ENCODE measurements at regions of chr15 and their contacts with region 1.

Region 1: DNA sequence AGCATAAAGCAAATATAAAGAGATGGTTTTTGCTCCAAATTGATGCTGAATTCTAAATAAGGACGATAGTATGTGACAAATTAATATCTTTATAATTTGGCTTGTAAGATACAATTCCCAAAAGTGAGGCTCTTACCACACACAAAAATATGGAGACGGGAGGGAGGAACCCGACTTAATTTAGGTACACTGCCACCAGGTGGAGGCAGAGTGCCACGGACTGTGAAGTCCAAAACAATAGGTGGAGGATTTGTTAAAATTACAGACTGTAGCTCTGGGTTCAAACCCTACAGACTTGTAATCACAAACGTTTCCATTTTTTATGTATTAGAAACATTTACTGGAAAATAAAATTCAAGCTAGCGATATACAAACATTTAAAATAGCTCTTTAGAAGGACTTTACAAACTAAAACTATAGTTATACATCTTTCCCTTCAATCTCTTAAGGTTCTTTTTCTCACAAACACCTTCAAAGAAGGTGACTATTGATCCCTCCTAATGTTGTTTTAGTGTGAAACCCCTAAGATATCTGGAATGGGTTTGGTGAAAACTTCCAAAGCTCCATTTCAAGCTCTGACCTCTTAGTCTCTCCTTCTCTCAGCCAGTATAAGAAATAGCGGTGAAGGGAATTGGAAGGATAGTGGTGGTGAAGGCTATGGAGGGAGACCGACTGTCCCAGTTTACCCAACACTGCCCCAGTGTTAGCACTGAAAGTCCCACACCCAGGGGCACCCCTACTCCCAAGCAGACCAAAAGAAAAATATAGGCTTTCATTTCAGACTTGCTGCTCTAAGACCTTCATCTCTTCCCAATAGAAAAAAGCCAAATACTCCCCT is 89.7 kb downstream of the AQP9 start:
- DNase-seq: peak; percentile 78
- ATAC-seq: peak; percentile 96
- H3K4me3 ChIP-seq: no peak overlapping the region
- H3K27ac ChIP-seq: no peak overlapping the region
- H3K4me1 ChIP-seq: peaks cover 2 to 7% of the 10 kb centered on the region in 2 experiments; a peak in 1 of 4 replicates
- H3K27me3 ChIP-seq: no peaks in the 10 kb centered on the region
- CTCF ChIP-seq: peak; percentile 76 to 93 (median 87)
- POLR2A ChIP-seq: no peak
- RAD21 ChIP-seq: peak; percentile 96

Region 2: GRCh38 chr15:58124585-58124984 is 103.3 kb before region 1 on chr15:
- CTCF ChIA-PET with region 1: no interaction called
- POLR2A ChIA-PET with region 1: no interaction called
- RAD21 ChIA-PET with region 1: no interaction called
- intact Hi-C with region 1: no loop called
- DNase-seq: no peak
- ATAC-seq: no peak
- H3K4me3 ChIP-seq: no peak overlapping the region
- H3K27ac ChIP-seq: no peak overlapping the region
- H3K4me1 ChIP-seq: no peaks in the 10 kb centered on the region
- H3K27me3 ChIP-seq: no peaks in the 10 kb centered on the region
- CTCF ChIP-seq: no peak
- POLR2A ChIP-seq: no peak
- RAD21 ChIP-seq: no peak

Region 3: DNA sequence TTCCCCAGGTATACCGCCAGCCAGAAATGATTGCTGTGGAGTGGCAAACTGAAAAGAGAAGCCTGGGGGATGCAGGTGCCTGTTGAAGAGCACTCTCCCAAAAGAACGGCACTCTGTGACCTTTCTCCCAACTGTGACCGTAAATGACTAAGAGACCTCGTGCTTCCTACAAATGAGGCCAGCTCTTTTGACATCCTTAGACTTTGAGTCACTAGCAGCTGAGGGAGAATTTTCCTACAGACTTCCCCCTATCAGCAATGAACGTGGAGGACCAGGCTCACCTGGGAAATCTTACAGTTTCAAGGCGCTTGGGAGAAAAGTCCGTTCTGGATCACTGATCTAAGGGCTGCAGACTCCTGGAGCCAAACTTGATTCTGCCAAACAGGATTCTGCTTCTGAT is 81.2 kb before region 1 on chr15:
- CTCF ChIA-PET with region 1: no interaction called
- POLR2A ChIA-PET with region 1: no interaction called
- RAD21 ChIA-PET with region 1: no interaction called
- intact Hi-C with region 1: no loop called
- DNase-seq: no peak
- ATAC-seq: no peak
- H3K4me3 ChIP-seq: no peak overlapping the region
- H3K27ac ChIP-seq: no peak overlapping the region
- H3K4me1 ChIP-seq: peaks cover 0 to 6% of the 10 kb centered on the region in 2 experiments; a peak in 1 of 4 replicates
- H3K27me3 ChIP-seq: no peaks in the 10 kb centered on the region
- CTCF ChIP-seq: no peak
- POLR2A ChIP-seq: no peak
- RAD21 ChIP-seq: no peak

Region 4: GRCh38 chr15:58475573-58476524 is 247.9 kb after region 1 on chr15:
- CTCF ChIA-PET with region 1: no interaction called
- POLR2A ChIA-PET with region 1: no interaction called
- RAD21 ChIA-PET with region 1: no interaction called
- intact Hi-C with region 1: no loop called
- DNase-seq: no peak
- ATAC-seq: no peak
- H3K4me3 ChIP-seq: no peak overlapping the region
- H3K27ac ChIP-seq: no peak overlapping the region
- H3K4me1 ChIP-seq: peaks cover 6 to 23% of the 10 kb centered on the region in 2 experiments; a peak in 3 of 4 replicates
- H3K27me3 ChIP-seq: no peaks in the 10 kb centered on the region
- CTCF ChIP-seq: no peak
- POLR2A ChIP-seq: no peak
- RAD21 ChIP-seq: no peak

Region 5: DNA sequence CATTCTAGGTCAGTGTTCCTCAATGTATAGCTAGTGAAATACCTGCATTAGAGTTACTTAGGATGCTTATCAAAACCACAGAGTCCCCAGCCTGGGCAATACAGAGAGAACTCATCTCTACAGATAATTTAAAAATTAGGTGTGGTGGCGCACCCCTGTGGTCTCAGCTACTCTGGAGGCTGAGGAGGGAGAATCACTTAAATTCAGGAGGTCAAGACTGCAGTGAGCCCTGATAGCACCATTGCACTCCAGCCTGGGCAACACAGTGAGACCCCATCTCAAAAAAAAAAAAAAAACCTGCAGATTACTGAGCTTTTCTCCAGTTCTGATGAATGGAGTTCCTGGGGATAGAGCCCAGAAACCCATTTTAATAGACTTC is 533.1 kb after region 1 on chr15:
- CTCF ChIA-PET with region 1: no interaction called
- POLR2A ChIA-PET with region 1: no interaction called
- RAD21 ChIA-PET with region 1: no interaction called
- intact Hi-C with region 1: loop called (anchors 5 kb)
- DNase-seq: no peak
- ATAC-seq: no peak
- H3K4me3 ChIP-seq: no peak overlapping the region
- H3K27ac ChIP-seq: no peak overlapping the region
- H3K4me1 ChIP-seq: no peaks in the 10 kb centered on the region
- H3K27me3 ChIP-seq: no peaks in the 10 kb centered on the region
- CTCF ChIP-seq: 0 out of 6 replicates have a peak, but pooled peaks of 1 of the 3 experiments have one; percentile 15
- POLR2A ChIP-seq: no peak
- RAD21 ChIP-seq: peak; percentile 40

Region 6: DNA sequence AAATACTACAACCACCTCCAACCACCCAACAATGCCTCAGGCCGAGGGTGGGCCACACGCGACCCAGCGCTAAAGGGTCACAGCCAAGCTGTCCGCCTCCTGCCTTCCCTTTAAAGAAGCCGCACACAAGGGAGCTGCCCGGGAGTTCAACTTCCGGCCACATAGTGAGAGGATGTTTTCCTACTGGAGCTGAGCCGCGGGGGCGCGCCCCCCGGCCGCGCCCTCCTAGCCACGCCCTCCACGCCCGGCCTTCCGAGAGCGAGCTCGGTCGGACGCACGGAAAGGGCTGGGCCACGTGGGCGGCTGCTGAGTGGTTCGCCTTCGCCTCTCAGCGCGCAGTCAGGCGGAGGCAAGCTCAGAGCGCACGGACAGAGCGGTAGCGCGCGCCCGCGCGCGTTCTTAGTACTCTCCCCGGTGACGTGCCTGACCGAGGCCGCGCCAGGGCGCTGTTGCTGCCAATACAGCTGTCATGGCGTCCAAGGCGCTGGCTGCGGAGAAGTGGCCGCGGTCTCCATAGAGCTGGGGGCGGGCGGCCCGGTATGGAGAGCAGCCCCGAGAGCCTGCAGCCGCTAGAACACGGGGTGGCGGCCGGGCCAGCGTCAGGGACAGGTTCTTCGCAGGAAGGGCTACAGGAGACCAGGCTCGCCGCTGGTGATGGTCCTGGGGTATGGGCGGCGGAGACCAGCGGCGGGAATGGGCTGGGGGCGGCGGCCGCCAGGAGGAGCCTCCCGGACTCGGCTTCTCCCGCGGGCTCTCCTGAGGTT is 543.1 kb after region 1 on chr15 and contains the start of gene MINDY2:
- CTCF ChIA-PET with region 1: interaction called, 10 read pairs
- POLR2A ChIA-PET with region 1: no interaction called
- RAD21 ChIA-PET with region 1: no interaction called
- intact Hi-C with region 1: no loop called
- DNase-seq: peak; percentile 97
- ATAC-seq: peak; percentile 96
- H3K4me3 ChIP-seq: peak within 1 kb of the TSS; percentile 84 to 94
- H3K27ac ChIP-seq: peak within 1 kb of the TSS; percentile 92
- H3K4me1 ChIP-seq: peaks cover 14 to 18% of the 10 kb centered on the region in 2 experiments
- H3K27me3 ChIP-seq: no peaks in the 10 kb centered on the region
- CTCF ChIP-seq: peak in 1 of 3 experiments; percentile 30; a peak in 3 of 6 replicates
- POLR2A ChIP-seq: peak; percentile 80
- RAD21 ChIP-seq: peak; percentile 42; the same call in 1 of the 2 replicates
- total RNA-seq, gene MINDY2: 17.6 TPM

Region 7: DNA sequence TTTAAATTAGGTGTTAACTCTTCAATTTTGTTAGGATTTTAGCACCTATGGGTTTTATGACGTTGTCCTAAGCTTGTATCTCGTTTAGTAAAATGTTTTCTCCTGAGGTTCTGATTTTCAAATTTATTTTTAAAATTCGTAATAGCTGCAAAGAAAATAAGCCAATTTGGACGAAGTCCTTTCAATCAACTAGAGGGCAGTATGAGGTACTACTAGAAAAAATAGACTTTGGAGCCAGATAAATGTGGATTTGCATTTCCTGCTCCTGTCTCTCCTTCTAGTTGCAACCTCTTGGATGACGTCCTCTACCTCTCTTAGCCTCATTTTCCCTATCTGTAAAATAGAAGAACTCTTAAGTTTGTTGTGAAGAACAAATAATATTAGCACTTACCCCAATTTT is 624.4 kb after region 1 on chr15:
- CTCF ChIA-PET with region 1: no interaction called
- POLR2A ChIA-PET with region 1: no interaction called
- RAD21 ChIA-PET with region 1: no interaction called
- intact Hi-C with region 1: loop called (anchors 10 kb)
- DNase-seq: no peak
- ATAC-seq: no peak
- H3K4me3 ChIP-seq: no peak overlapping the region
- H3K27ac ChIP-seq: no peak overlapping the region
- H3K4me1 ChIP-seq: no peaks in the 10 kb centered on the region
- H3K27me3 ChIP-seq: no peaks in the 10 kb centered on the region
- CTCF ChIP-seq: peak in 1 of 3 experiments; percentile 27; a peak in 1 of 6 replicates
- POLR2A ChIP-seq: no peak
- RAD21 ChIP-seq: no peak

Region 8: GRCh38 chr15:58957101-58957973 is 729.4 kb after region 1 on chr15:
- CTCF ChIA-PET with region 1: no interaction called
- POLR2A ChIA-PET with region 1: no interaction called
- RAD21 ChIA-PET with region 1: no interaction called
- intact Hi-C with region 1: loop called (anchors 10 kb)
- DNase-seq: peak; percentile 81
- ATAC-seq: peak; percentile 96
- H3K4me3 ChIP-seq: no peak overlapping the region
- H3K27ac ChIP-seq: no peak overlapping the region
- H3K4me1 ChIP-seq: peaks cover 10 to 22% of the 10 kb centered on the region in 2 experiments
- H3K27me3 ChIP-seq: no peaks in the 10 kb centered on the region
- CTCF ChIP-seq: peak; percentile 79 to 90 (median 82)
- POLR2A ChIP-seq: no peak
- RAD21 ChIP-seq: peak; percentile 75

Region 9: DNA sequence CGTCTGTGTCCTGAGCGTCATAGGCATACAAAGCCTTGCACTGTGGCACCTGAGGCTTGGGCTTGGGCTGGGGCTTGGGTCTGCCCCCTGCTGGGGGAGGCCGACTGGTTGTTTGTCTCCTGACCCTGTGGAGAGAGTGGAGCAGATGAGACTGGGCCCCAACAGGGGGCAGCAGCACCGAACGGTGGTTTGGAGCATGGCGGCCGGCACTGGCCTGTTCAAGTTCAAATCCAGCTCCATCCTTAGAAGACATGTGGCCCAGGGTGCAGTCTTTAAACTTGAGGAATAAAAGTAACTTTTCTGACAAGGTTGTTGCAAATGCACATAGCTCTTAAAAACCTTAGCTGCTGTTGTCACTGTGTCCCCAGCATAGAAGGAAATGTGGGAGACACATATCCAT is 910.3 kb after region 1 on chr15:
- CTCF ChIA-PET with region 1: interaction called, 3 read pairs
- POLR2A ChIA-PET with region 1: no interaction called
- RAD21 ChIA-PET with region 1: no interaction called
- intact Hi-C with region 1: loop called (anchors 10 kb)
- DNase-seq: peak; percentile 46
- ATAC-seq: peak; percentile 95
- H3K4me3 ChIP-seq: no peak overlapping the region
- H3K27ac ChIP-seq: no peak overlapping the region
- H3K4me1 ChIP-seq: peaks cover 0 to 6% of the 10 kb centered on the region in 2 experiments; a peak in 1 of 4 replicates
- H3K27me3 ChIP-seq: no peaks in the 10 kb centered on the region
- CTCF ChIP-seq: peak; percentile 90 to 97 (median 92)
- POLR2A ChIP-seq: no peak
- RAD21 ChIP-seq: peak; percentile 61